ENCODE measurements at regions of chr6 and their contacts with region 1.

Region 1: DNA sequence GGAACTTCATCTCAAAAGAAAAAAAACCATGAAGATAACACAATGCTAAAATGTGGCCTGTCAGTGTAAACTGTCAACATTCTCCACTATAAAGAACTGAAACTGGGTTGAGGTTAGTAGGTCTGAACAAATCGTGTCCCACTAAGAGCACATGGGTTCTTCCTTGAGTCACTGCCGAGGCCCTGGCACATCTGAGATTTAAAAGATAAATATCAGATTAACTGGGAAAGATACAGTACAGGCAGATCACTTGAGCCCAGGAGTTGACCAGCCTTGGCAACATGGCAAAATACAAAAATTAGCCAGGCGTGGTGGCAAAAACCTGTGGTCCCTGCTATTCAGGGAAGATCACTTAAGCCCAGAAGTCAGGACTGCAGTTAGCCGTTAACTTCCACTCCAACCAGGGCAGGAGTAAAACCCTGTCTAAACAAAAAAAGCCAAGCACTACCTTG is 5.6 kb downstream of the EEF1A1 start:
- DNase-seq: no peak
- ATAC-seq: peak in 1 of 2 donors; percentile 7
- H3K4me3 ChIP-seq: no peak overlapping the region
- H3K27ac ChIP-seq: peak overlapping the region; percentile 12
- H3K4me1 ChIP-seq: no peaks in the 10 kb centered on the region
- H3K27me3 ChIP-seq: no peaks in the 10 kb centered on the region

Region 2: GRCh38 chr6:73471686-73472290 is 43.4 kb before region 1 on chr6:
- intact Hi-C with region 1: no loop called
- DNase-seq: no peak
- ATAC-seq: no peak
- H3K4me3 ChIP-seq: no peak overlapping the region
- H3K27ac ChIP-seq: no peak overlapping the region
- H3K4me1 ChIP-seq: no peaks in the 10 kb centered on the region
- H3K27me3 ChIP-seq: no peaks in the 10 kb centered on the region

Region 3: DNA sequence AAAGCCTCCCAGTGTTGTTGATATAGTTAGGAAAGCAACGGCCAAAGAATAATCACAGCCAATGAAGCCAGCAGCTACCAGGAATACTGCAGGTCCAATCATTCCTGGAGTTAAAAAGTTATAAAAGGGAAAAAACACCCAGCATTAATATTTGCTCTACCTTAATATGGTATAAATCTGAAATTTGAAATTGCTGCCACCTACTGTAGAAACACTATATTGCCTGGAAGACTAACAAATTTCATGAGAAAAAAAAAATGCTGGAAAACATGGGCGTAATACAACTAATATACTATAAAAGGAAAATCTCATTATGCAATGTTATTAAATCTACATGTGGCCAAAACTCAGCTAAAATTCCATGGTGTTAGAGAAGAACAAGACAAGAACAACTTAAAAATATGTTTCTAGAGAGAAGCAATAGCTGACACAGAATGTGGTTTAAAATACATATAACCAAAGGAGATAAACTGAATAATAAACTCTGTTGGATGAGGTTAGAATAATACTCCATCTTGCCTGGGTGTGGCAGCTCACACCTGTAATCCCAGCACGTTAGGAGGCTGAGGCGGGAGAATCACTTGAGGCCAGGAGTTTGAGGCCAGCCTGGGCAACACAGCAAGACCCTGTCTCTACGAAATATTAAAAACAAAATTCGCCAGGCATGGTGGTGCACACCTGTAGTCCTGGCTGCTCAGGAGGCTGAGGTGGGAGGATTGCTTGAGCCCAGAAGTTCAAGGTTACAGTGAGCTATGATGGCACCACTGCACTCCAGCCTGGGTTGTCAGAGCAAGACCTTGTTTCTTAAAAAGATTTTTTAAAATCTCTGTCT is 95.4 kb after region 1 on chr6:
- intact Hi-C with region 1: loop called (anchors 2 to 10 kb)
- DNase-seq: no peak
- ATAC-seq: peak; percentile 52 to 63
- H3K4me3 ChIP-seq: no peak overlapping the region
- H3K27ac ChIP-seq: no peak overlapping the region
- H3K4me1 ChIP-seq: no peaks in the 10 kb centered on the region
- H3K27me3 ChIP-seq: no peaks in the 10 kb centered on the region